ENCODE measurements at regions of chr6 and their contacts with region 1.

Region 1: GRCh38 chr6:164322533-164322932 is 908.0 kb downstream of the QKI start:
- DNase-seq: peak; percentile 89
- H3K4me3 ChIP-seq: no peak overlapping the region
- H3K27ac ChIP-seq: peak overlapping the region; percentile 62
- H3K4me1 ChIP-seq: peaks cover 22% of the 10 kb centered on the region
- H3K27me3 ChIP-seq: no peaks in the 10 kb centered on the region
- CTCF ChIP-seq: no peak
- POLR2A ChIP-seq: no peak

Region 2: GRCh38 chr6:163926642-163927041 is 395.9 kb before region 1 on chr6:
- CTCF ChIA-PET with region 1: no interaction called
- POLR2A ChIA-PET with region 1: no interaction called
- dilution Hi-C with region 1: no loop called
- intact Hi-C with region 1: no loop called
- DNase-seq: no peak
- H3K4me3 ChIP-seq: no peak overlapping the region
- H3K27ac ChIP-seq: no peak overlapping the region
- H3K4me1 ChIP-seq: no peaks in the 10 kb centered on the region
- H3K27me3 ChIP-seq: no peaks in the 10 kb centered on the region
- CTCF ChIP-seq: no peak
- POLR2A ChIP-seq: no peak

Region 3: GRCh38 chr6:164247106-164247505 is 75.4 kb before region 1 on chr6:
- CTCF ChIA-PET with region 1: no interaction called
- POLR2A ChIA-PET with region 1: no interaction called
- dilution Hi-C with region 1: no loop called
- intact Hi-C with region 1: no loop called
- DNase-seq: no peak
- H3K4me3 ChIP-seq: no peak overlapping the region
- H3K27ac ChIP-seq: no peak overlapping the region
- H3K4me1 ChIP-seq: no peaks in the 10 kb centered on the region
- H3K27me3 ChIP-seq: no peaks in the 10 kb centered on the region
- CTCF ChIP-seq: no peak
- POLR2A ChIP-seq: no peak

Region 4: GRCh38 chr6:164370773-164371172 is 48.2 kb after region 1 on chr6:
- CTCF ChIA-PET with region 1: no interaction called
- POLR2A ChIA-PET with region 1: no interaction called
- dilution Hi-C with region 1: no loop called
- intact Hi-C with region 1: loop called (anchors 1 kb)
- DNase-seq: no peak
- H3K4me3 ChIP-seq: no peak overlapping the region
- H3K27ac ChIP-seq: no peak overlapping the region
- H3K4me1 ChIP-seq: peaks cover 15% of the 10 kb centered on the region
- H3K27me3 ChIP-seq: no peaks in the 10 kb centered on the region
- CTCF ChIP-seq: no peak
- POLR2A ChIP-seq: no peak

Region 5: DNA sequence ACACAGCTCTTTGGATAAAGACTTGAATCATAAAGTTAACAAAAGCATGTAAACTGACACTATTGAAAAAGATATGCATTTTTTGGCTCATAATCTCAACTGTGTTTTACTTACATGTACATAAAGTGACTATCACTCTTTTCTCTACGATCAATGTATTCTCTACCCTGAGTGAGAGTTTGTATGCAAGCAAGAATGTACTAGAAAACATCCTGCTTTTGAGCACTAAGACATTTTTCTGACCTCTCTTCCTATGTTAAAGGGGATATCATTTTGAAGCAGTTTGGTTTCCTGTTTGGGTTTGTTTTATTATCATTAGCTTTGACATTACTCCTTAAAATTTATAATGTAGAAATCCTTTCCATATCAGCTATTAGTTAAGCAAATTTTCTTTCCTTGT is 76.1 kb after region 1 on chr6:
- CTCF ChIA-PET with region 1: interaction called, 5 read pairs
- POLR2A ChIA-PET with region 1: no interaction called
- dilution Hi-C with region 1: no loop called
- intact Hi-C with region 1: loop called (anchors 2 kb)
- DNase-seq: peak; percentile 51
- H3K4me3 ChIP-seq: no peak overlapping the region
- H3K27ac ChIP-seq: peak overlapping the region; percentile 26
- H3K4me1 ChIP-seq: peaks cover 29% of the 10 kb centered on the region
- H3K27me3 ChIP-seq: no peaks in the 10 kb centered on the region
- CTCF ChIP-seq: no peak
- POLR2A ChIP-seq: no peak

Region 6: GRCh38 chr6:164502833-164503232 is 180.3 kb after region 1 on chr6:
- CTCF ChIA-PET with region 1: interaction called, 3 read pairs
- POLR2A ChIA-PET with region 1: no interaction called
- dilution Hi-C with region 1: no loop called
- intact Hi-C with region 1: loop called (anchors 5 kb)
- DNase-seq: peak; percentile 83
- H3K4me3 ChIP-seq: no peak overlapping the region
- H3K27ac ChIP-seq: no peak overlapping the region
- H3K4me1 ChIP-seq: peaks cover 9% of the 10 kb centered on the region
- H3K27me3 ChIP-seq: no peaks in the 10 kb centered on the region
- CTCF ChIP-seq: no peak
- POLR2A ChIP-seq: no peak